Activated naive CD4-positive, alpha-beta T cell treated with anti-CD3 and anti-CD28 coated beads for 36 hours (primary cell): ENCODE measurements at regions of chr10 and their contacts with region 1.

Region 1: DNA sequence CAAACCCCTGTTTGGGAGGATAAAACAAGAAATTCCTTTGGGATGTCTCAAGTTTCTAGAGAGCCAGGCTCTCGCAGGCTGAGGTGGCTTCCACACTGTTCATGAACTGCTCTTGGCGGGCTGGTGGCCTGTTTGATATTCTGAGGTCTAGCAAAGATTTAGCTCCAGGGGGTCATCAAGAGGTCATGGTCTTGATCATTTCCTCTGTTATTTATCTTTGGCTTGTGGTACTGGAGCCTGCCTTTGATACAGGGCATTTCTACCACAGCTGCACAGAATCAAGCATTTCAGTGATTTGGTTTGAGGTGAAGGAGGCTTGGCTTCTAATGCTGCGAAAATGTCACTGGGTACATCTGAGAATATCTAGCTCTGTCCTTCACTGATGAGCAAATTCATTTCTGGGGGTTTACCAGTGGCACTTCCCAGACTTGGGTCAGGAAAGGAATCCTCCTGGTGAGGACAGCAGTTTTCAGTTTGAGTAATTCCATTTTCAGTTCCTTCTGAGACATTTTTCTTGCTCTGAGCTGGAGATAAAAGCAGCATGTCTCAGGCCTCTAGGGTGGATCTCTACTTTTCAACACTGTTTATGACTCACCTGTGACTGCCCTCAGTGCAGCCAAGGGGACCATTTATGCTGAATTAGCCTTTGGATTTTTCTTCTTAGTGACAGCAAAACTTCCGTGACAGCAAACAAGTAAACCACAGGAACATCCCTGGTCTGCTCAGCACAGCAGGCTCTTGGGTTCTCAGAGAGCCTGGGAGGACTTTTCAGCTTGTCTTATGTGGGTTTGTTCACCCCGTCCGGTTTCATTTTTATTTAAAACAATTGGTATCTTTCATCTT is 312.0 kb downstream of the RNLS start:
- DNase-seq: peak; percentile 43
- H3K4me3 Mint-ChIP-seq: no peak overlapping the region
- H3K27ac Mint-ChIP-seq: peak overlapping the region; percentile 4
- H3K4me1 Mint-ChIP-seq: peaks cover 30% of the 10 kb centered on the region
- H3K27me3 Mint-ChIP-seq: peaks cover 3% of the 10 kb centered on the region

Region 2: DNA sequence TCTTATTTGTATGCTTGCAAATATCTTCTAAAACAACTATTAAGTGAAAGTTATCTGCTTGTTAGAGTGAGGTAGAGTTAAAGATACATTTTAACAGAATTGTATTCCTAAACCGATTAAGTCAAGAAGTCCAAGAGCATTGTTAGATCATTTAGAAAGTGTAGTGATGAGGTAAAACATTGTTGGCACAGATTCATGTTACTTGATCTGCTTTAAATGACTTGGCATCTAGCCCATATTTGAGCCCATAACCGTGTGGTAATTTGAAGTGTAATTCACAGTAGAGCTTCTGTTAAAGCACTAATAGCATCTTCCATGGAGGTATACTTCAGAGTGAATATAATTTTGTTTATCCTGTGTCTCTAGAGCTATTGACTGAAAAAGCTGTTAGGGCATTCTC is 345.5 kb before region 1 on chr10:
- CTCF ChIA-PET with region 1: no interaction called
- intact Hi-C with region 1: loop called (anchors 5 kb)
- DNase-seq: no peak
- H3K4me3 Mint-ChIP-seq: no peak overlapping the region
- H3K27ac Mint-ChIP-seq: no peak overlapping the region
- H3K4me1 Mint-ChIP-seq: peaks cover 78% of the 10 kb centered on the region
- H3K27me3 Mint-ChIP-seq: no peaks in the 10 kb centered on the region

Region 3: GRCh38 chr10:88004451-88004850 is 266.6 kb before region 1 on chr10:
- CTCF ChIA-PET with region 1: no interaction called
- intact Hi-C with region 1: no loop called
- DNase-seq: no peak
- H3K4me3 Mint-ChIP-seq: no peak overlapping the region
- H3K27ac Mint-ChIP-seq: no peak overlapping the region
- H3K4me1 Mint-ChIP-seq: no peaks in the 10 kb centered on the region
- H3K27me3 Mint-ChIP-seq: no peaks in the 10 kb centered on the region

Region 4: DNA sequence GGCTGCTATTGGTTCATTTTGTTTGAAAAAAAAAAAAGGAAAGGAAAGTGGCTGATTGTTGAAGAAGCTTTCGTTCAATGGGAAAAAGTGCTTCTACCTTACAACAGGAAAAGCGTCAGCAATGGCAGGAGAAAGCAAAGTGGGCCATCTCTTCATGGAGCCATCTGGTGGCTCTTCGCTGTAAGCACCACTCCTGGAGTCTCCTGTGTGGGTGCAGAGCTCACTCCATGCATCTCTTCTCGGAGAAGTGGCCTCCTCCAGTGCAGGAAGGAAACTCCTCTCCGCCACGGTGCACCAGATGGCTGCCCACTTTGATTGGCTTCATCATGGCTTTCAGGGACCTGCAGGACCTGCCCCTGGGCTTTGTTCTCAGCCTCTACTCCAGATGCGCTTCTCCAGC is 156.7 kb before region 1 on chr10:
- CTCF ChIA-PET with region 1: no interaction called
- intact Hi-C with region 1: loop called (anchors 1 kb)
- DNase-seq: peak; percentile 45
- H3K4me3 Mint-ChIP-seq: no peak overlapping the region
- H3K27ac Mint-ChIP-seq: no peak overlapping the region
- H3K4me1 Mint-ChIP-seq: peaks cover 8% of the 10 kb centered on the region
- H3K27me3 Mint-ChIP-seq: peaks cover 10% of the 10 kb centered on the region

Region 5: GRCh38 chr10:88152720-88153119 is 118.4 kb before region 1 on chr10:
- CTCF ChIA-PET with region 1: no interaction called
- intact Hi-C with region 1: loop called (anchors 2 kb)
- DNase-seq: peak; percentile 76
- H3K4me3 Mint-ChIP-seq: no peak overlapping the region
- H3K27ac Mint-ChIP-seq: peak overlapping the region; percentile 86
- H3K4me1 Mint-ChIP-seq: peaks cover 22% of the 10 kb centered on the region
- H3K27me3 Mint-ChIP-seq: no peaks in the 10 kb centered on the region

Region 6: DNA sequence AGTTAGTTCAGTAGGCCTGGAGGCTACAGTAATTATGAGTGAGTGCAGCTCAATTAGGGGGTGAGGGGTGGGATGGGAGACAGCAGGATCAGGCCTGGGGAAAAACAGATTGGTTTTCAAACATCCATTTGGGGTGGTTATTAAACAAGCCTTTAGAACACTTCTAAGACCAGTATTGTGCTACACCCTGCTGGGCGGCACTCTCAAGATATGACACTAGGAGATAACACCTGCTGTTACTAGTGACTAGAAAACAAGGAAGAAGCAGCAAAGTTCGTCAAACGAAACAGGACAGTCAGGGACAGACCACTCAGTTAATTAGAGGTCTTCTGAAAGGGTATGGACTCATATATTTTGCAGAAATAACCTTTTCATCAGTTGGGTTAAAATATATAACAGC is 54.1 kb before region 1 on chr10:
- CTCF ChIA-PET with region 1: no interaction called
- intact Hi-C with region 1: no loop called
- DNase-seq: peak; percentile 7
- H3K4me3 Mint-ChIP-seq: no peak overlapping the region
- H3K27ac Mint-ChIP-seq: no peak overlapping the region
- H3K4me1 Mint-ChIP-seq: peaks cover 4% of the 10 kb centered on the region
- H3K27me3 Mint-ChIP-seq: no peaks in the 10 kb centered on the region

Region 7: DNA sequence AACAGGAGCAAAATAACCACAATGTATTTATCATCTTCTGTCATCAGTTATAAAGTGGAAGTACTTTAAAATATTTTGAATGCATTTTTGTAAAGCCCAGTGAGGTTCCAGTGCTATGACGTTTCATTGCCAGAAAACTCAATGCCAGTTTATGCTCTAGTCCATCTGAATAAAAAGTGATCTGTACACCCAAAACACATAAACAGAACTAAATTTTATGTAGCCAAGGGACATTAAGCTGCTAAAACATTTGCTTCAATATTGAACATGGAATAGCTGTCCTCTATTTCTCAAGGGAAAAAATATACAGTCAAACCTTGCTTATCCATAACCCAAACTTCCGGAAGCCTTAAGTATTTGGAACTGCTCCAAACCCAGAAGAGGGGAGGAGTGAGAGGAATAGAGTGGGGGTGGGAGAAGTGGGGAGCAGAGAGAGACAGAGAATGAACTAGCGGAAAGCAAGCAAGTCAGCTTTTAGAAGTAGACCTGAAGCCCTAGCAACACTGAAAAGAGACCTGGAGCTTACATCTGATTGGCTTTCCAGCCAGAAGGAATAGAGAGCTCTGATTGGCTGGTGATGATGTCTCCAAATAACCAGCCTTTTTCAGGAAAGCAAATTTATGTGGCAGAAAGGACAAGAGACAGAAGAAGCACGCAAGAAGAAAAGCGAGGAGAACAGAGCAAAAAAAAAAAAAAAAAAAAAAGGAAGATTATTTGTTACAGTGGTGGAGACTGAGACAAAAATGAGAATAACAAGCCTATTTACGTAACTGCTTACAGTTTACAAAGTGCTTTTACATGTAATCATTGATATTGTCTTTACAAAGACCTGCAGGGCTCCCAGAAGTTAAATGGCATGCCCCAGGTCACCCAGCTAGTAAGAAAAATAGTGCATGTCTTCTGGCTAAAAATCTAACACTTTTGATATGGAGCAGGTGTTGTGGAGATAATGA is 116.0 kb after region 1 on chr10:
- CTCF ChIA-PET with region 1: no interaction called
- intact Hi-C with region 1: loop called (anchors 2 kb)
- DNase-seq: peak; percentile 7
- H3K4me3 Mint-ChIP-seq: no peak overlapping the region
- H3K27ac Mint-ChIP-seq: no peak overlapping the region
- H3K4me1 Mint-ChIP-seq: peaks cover 25% of the 10 kb centered on the region
- H3K27me3 Mint-ChIP-seq: no peaks in the 10 kb centered on the region